ENCODE measurements at regions of chr2 and their contacts with region 1.

Region 1: GRCh38 chr2:176096986-176097819 is 2.4 kb upstream of the HOXD12 start:
- DNase-seq: peak in 1 of 2 donors; percentile 41
- ATAC-seq: peak; percentile 72 to 79
- H3K4me3 ChIP-seq: peak overlapping the region; percentile 36 to 62 (median 45)
- H3K27ac ChIP-seq: no peak overlapping the region
- H3K4me1 ChIP-seq: peaks cover 16 to 19% of the 10 kb centered on the region in 2 donors
- H3K27me3 ChIP-seq: peaks cover 98 to 100% (median 98%) of the 10 kb centered on the region in 3 donors
- CTCF ChIP-seq: peak; percentile 64 to 91 (median 86)
- POLR2A ChIP-seq: no peak

Region 2: DNA sequence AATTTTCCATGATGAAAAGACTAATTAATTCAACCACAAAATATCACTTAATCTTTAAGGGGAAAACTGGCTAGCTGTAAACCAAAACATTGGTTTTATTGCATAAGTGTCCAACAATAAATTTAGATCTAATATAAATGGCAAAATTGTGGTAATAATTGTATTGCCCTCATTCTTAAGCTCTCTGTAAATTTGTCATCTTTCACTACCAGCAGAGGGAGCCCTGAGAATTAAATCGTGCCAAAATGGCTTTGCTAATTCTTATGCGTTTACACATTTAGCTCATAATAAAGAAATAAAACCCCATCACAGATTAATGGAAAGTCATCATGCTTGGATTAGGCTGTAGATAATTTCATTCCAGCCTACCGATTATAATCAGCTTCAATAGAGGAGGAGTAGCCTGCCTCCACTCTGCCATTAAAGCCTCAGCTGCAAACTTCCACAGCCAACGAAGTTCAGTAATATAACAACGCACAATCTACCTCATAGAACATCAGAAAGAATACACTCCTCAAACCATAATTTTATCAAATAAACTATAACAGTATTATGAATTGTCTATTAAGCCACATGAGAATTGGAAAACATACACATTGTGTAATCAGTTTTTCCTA is 845.7 kb before region 1 on chr2:
- in situ Hi-C with region 1: no loop called
- intact Hi-C with region 1: loop called (anchors 5 kb)
- DNase-seq: no peak
- ATAC-seq: no peak
- H3K4me3 ChIP-seq: no peak overlapping the region
- H3K27ac ChIP-seq: no peak overlapping the region
- H3K4me1 ChIP-seq: no peaks in the 10 kb centered on the region
- H3K27me3 ChIP-seq: peaks cover 2 to 10% (median 7%) of the 10 kb centered on the region in 3 donors
- CTCF ChIP-seq: peak in 3 of 5 experiments; percentile 19 to 57 (median 43)
- POLR2A ChIP-seq: no peak

Region 3: DNA sequence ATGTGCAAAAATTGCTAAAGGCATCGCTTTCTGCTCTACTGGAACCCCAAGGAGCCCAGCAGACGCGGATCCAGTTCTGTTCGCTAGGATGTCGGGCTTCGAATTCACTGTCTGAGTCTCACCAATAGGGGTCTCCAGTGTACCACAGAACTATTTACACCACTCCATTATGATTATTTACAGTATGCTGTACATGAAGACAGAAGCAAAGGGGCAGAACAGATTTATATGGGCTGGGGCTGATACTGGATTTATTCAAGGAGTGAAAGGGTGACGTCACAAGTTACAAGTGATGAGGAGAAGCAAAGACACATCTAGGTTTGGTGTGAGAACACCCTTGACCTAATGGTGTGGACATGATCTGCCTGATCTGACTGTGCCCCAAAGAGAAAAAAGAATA is 730.4 kb before region 1 on chr2:
- in situ Hi-C with region 1: loop called in 3 of 4 experiments (anchors 5 to 25 kb)
- intact Hi-C with region 1: loop called (anchors 5 kb)
- DNase-seq: no peak
- ATAC-seq: no peak
- H3K4me3 ChIP-seq: no peak overlapping the region
- H3K27ac ChIP-seq: no peak overlapping the region
- H3K4me1 ChIP-seq: no peaks in the 10 kb centered on the region
- H3K27me3 ChIP-seq: peaks cover 0 to 8% (median 8%) of the 10 kb centered on the region in 3 donors
- CTCF ChIP-seq: peak in 4 of 5 experiments; percentile 20 to 62 (median 49)
- POLR2A ChIP-seq: no peak

Region 4: DNA sequence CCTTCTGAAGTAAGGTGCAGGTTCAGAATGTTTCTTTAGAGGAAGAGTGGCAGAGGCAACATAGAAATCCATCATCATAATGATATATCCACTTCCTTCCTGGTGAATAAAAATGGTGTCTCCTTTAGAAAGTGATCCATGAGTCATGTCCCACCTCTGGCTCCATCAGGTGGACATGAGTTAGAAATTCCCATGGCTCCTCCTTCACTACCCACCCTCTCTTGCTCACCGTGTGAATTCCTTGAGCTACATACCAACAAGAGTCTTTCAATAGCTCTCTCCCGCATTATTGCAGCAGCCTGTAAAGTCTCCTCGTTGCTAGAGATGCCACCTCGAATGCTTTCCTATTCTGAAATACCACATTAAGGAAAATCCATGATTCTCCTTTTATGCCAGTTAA is 412.7 kb before region 1 on chr2:
- in situ Hi-C with region 1: loop called in 2 of 4 experiments (anchors 5 to 10 kb)
- intact Hi-C with region 1: no loop called
- DNase-seq: no peak
- ATAC-seq: no peak
- H3K4me3 ChIP-seq: no peak overlapping the region
- H3K27ac ChIP-seq: no peak overlapping the region
- H3K4me1 ChIP-seq: no peaks in the 10 kb centered on the region
- H3K27me3 ChIP-seq: peaks cover 0 to 17% (median 16%) of the 10 kb centered on the region in 3 donors
- CTCF ChIP-seq: no peak
- POLR2A ChIP-seq: no peak

Region 5: DNA sequence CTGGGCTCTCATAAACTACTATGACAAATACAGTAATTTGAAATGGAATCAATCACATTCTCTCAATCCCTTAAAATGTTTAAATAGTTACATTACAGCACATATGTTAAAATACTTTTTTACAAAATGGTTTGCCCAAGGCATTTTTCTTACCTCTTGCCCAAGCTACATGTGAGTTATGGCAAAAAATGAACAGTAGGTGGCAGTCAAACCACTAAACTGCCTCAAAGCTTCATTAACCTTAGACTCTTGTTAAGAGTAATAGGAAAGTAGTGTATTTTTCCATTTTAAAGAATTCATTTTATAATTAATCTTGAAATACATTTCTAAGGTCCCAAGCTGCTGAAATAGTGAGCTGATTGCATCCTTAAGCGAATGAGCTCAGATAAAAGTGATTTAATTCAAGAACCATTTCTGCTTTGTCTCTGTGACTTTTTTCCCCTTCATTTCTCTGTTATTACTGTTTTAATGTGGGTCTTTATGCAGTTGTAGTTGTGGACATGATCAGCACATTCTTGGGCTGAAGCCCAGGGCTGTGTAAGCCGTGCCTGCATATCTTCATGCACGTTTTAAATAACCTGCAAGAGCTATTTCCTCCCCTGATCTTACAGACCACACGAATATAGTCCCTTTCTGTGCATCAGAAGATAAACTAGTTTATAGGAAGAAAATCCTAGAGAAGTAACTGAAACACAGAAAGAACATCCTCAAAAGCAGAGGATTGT is 406.9 kb before region 1 on chr2:
- in situ Hi-C with region 1: loop called in 2 of 4 experiments (anchors 5 to 10 kb)
- intact Hi-C with region 1: no loop called
- DNase-seq: no peak
- ATAC-seq: peak; percentile 69 to 85
- H3K4me3 ChIP-seq: no peak overlapping the region
- H3K27ac ChIP-seq: no peak overlapping the region
- H3K4me1 ChIP-seq: no peaks in the 10 kb centered on the region
- H3K27me3 ChIP-seq: peaks cover 0 to 14% (median 2%) of the 10 kb centered on the region in 3 donors
- CTCF ChIP-seq: peak; percentile 68 to 89 (median 82)
- POLR2A ChIP-seq: no peak

Region 6: GRCh38 chr2:176079831-176080539 is 17.2 kb before region 1 on chr2:
- in situ Hi-C with region 1: no loop called
- intact Hi-C with region 1: loop called (anchors 2 kb)
- DNase-seq: no peak
- ATAC-seq: peak; percentile 28 to 63
- H3K4me3 ChIP-seq: peak overlapping the region; percentile 12 to 39 (median 29)
- H3K27ac ChIP-seq: no peak overlapping the region
- H3K4me1 ChIP-seq: peaks cover 17 to 21% of the 10 kb centered on the region in 2 donors
- H3K27me3 ChIP-seq: peaks cover 93 to 97% (median 94%) of the 10 kb centered on the region in 3 donors
- CTCF ChIP-seq: peak; percentile 55 to 91 (median 69)
- POLR2A ChIP-seq: no peak

Measured in gastrocnemius medialis (tissue), 4 donors.